ENCODE measurements at regions of chrX and their contacts with region 1.

Region 1: GRCh38 chrX:49163555-49164419 is 1.2 kb downstream of the MAGIX start:
- DNase-seq: peak; percentile 79
- ATAC-seq: peak; percentile 60
- H3K4me3 Mint-ChIP-seq: peak overlapping the region; percentile 83
- H3K27ac Mint-ChIP-seq: peak overlapping the region; percentile 92
- H3K4me1 Mint-ChIP-seq: peaks cover 31% of the 10 kb centered on the region
- H3K27me3 Mint-ChIP-seq: no peaks in the 10 kb centered on the region
- CTCF ChIP-seq: no peak

Region 2: GRCh38 chrX:47877327-47877726 is 1286.5 kb before region 1 on chrX:
- CTCF ChIA-PET with region 1: no interaction called
- POLR2A ChIA-PET with region 1: no interaction called
- intact Hi-C with region 1: no loop called
- DNase-seq: no peak
- ATAC-seq: no peak
- H3K4me3 Mint-ChIP-seq: no peak overlapping the region
- H3K27ac Mint-ChIP-seq: no peak overlapping the region
- H3K4me1 Mint-ChIP-seq: peaks cover 4% of the 10 kb centered on the region
- H3K27me3 Mint-ChIP-seq: no peaks in the 10 kb centered on the region
- CTCF ChIP-seq: no peak

Region 3: GRCh38 chrX:49079489-49080428 is 84.0 kb before region 1 on chrX and contains the start of gene WDR45:
- CTCF ChIA-PET with region 1: no interaction called
- POLR2A ChIA-PET with region 1: interaction called, 6 read pairs
- intact Hi-C with region 1: loop called (anchors 5 kb)
- DNase-seq: peak; percentile 58
- ATAC-seq: peak; percentile 83
- H3K4me3 Mint-ChIP-seq: peak within 1 kb of the TSS; percentile 91
- H3K27ac Mint-ChIP-seq: peak within 1 kb of the TSS; percentile 98
- H3K4me1 Mint-ChIP-seq: peaks cover 10% of the 10 kb centered on the region
- H3K27me3 Mint-ChIP-seq: no peaks in the 10 kb centered on the region
- CTCF ChIP-seq: no peak
- total RNA-seq, gene WDR45: 48.8 and 55.8 TPM in 2 replicates

Region 4: DNA sequence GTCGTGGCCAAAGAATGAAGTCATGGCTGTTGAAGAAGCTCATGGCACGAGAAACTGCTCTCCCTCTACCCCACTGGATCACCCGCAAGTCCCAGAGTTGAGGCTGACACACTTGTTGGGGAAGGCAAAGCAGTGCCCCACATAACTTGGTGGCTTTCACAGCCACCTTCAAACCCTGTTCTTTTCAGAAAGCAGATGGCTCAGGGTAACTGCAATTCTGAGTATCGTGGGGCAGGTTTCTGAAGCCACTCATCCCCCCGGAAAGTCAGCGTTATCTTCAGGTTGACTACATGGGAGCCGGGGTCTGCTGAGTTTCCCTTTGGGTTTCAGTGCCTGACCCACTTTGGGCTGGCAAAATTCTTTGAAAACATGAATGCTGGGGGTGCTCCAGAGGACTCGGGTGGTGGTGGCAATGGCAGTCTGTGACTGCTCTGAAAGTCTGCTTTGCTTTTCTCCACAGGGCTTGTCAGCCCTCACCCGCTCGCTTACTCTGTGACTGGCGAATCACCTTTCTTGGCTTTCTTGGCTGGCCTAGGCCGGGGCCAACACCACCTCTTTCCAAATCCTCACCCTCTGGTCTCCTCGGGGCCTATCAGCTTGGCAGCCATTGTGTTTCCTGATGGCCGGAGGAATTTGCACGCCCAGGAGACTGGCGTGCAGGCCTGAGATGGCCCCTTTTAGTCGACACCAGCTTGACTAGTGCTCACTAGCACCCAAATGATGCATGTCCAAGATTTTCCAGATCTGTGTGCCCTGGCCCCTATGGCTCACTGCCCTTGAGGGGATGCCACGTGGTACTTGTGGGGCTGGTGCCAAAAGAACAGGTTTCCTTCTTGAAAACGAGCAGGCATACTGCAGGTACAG is 113.1 kb after region 1 on chrX:
- CTCF ChIA-PET with region 1: no interaction called
- POLR2A ChIA-PET with region 1: no interaction called
- intact Hi-C with region 1: no loop called
- DNase-seq: no peak
- ATAC-seq: no peak
- H3K4me3 Mint-ChIP-seq: no peak overlapping the region
- H3K27ac Mint-ChIP-seq: no peak overlapping the region
- H3K4me1 Mint-ChIP-seq: peaks cover 33% of the 10 kb centered on the region
- H3K27me3 Mint-ChIP-seq: no peaks in the 10 kb centered on the region
- CTCF ChIP-seq: no peak

Region 5: GRCh38 chrX:49312176-49312575 is 148.4 kb after region 1 on chrX:
- CTCF ChIA-PET with region 1: no interaction called
- POLR2A ChIA-PET with region 1: no interaction called
- intact Hi-C with region 1: no loop called
- DNase-seq: no peak
- ATAC-seq: no peak
- H3K4me3 Mint-ChIP-seq: no peak overlapping the region
- H3K27ac Mint-ChIP-seq: no peak overlapping the region
- H3K4me1 Mint-ChIP-seq: peaks cover 18% of the 10 kb centered on the region
- H3K27me3 Mint-ChIP-seq: no peaks in the 10 kb centered on the region
- CTCF ChIP-seq: no peak